K562 (cell line): ENCODE measurements at regions of chr17 and their contacts with region 1.

Region 1: DNA sequence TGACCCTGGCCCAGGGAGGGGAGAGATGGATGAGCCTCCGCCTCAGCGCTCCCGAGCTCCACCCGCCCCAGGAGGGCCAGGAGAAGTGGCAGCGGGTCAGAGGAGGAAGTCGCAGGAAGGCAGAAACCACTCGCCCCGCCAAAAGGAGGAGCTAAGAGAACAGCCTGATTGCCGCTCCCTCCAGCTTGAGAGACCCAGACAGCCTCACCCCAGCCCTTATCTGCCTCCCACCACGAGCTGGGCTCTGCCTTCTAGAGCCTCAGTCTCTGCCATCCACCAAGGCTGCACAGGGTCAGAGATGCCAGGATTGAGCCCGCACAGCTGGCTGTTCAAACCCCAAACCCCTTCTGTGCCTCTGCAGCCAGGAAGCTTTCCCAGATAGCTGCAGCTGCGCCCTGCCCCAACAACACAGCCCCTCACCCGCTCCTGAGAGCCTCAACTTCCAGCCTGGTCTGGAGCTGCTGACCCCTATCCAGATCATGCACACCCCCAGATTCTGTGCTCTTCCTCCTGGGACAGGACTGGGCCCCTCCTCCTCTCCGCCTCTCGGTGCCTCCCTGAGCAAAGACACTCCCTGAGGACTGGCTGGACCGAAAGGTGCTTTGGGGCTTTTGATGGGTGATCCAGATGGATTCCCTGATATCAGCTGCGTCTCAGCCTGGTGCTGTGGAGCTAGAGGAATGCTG is 1.0 kb upstream of the ATP2A3 start:
- DNase-seq: peak; percentile 66 to 91 (median 74)
- ATAC-seq: peak; percentile 87
- H3K4me3 ChIP-seq: peak overlapping the region; percentile 73
- H3K27ac ChIP-seq: peak overlapping the region; percentile 88; the same call in 2 of the 3 replicates
- H3K4me1 ChIP-seq: peaks cover 37 to 73% of the 10 kb centered on the region in 2 experiments
- H3K27me3 ChIP-seq: no peaks in the 10 kb centered on the region
- CTCF ChIP-seq: peak in 2 of 3 experiments; percentile 39 to 48; a peak in 4 of 6 replicates
- EP300 ChIP-seq: no peak
- POLR2A ChIP-seq: peak; percentile 69
- RAD21 ChIP-seq: peak; percentile 25 to 59; a peak in 3 of 4 replicates

Region 2: DNA sequence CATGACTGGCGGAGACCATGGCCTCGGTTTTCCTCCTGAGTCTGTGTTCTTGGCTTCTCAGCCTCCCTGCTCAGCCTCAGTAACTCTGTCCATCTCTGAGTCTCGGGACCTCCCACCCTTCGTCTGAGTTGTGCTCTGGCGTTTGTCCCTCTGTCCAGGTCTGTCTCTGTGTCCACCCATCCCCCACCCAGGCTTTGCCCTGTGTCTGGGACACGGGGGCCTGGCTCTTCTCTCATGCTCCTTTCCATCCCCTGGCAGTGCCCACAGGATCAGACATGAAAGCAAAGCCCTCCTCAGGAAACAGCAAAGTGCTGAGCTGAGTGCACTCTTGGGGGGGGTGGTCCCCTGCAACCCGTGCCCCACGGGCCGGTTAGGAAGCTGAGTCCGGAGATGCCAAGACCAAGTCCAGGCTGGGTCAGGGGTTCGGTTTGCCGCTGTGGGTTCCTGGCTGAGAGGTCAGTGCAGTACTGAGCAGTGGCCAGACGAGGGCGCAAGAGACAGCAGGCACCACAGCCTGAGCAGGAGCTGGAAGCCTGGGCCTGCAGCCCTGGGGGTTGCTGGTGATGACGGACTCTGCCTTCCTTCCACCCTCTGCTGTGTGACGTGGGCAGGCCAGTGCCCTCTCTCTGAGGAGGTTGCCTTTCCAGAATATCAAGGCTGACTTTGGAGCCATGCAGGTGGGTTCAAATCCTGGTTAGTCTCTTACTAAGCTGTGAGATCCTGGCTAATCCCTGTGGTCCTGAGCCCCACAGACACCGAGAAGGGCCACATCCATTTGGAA is 51.5 kb before region 1 on chr17:
- CTCF ChIA-PET with region 1: no interaction called
- POLR2A ChIA-PET with region 1: interaction called, 3 read pairs
- in situ Hi-C with region 1: no loop called
- intact Hi-C with region 1: loop called (anchors 2 kb)
- DNase-seq: peak; percentile 65 to 80 (median 71)
- ATAC-seq: peak; percentile 79
- H3K4me3 ChIP-seq: peak overlapping the region; percentile 55
- H3K27ac ChIP-seq: peak overlapping the region; percentile 81; the same call in 2 of the 3 replicates
- H3K4me1 ChIP-seq: peaks cover 32 to 46% of the 10 kb centered on the region in 2 experiments
- H3K27me3 ChIP-seq: no peaks in the 10 kb centered on the region
- CTCF ChIP-seq: peak; percentile 84 to 92 (median 87)
- EP300 ChIP-seq: no peak
- POLR2A ChIP-seq: no peak
- RAD21 ChIP-seq: peak; percentile 52 to 79; a peak in 3 of 4 replicates